Gastrocnemius medialis (tissue), 4 donors: ENCODE measurements at regions of chr1 and their contacts with region 1.

Region 1: DNA sequence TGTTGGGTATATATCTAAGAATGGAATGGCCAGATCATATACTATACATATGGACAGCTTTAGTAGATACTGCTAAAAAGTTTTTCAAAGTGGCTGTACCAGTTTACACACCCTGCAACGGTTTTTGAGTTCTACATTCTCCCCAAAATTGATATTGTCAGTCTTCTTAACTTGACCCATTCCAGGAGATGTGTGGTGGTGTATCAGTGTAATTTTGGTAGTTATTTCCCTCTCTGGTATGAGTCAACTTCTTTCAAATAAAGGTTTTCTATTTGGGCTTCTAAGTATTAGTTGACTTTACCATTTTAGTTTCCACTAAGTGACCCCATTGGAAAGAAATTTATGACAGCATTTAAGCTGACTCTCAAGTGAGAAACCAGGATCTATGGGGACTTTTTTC is 29.2 kb downstream of the INKA2 start:
- DNase-seq: no peak
- ATAC-seq: no peak
- H3K4me3 ChIP-seq: no peak overlapping the region
- H3K27ac ChIP-seq: no peak overlapping the region
- H3K4me1 ChIP-seq: no peaks in the 10 kb centered on the region
- H3K27me3 ChIP-seq: no peaks in the 10 kb centered on the region
- CTCF ChIP-seq: no peak
- POLR2A ChIP-seq: no peak

Region 2: GRCh38 chr1:111570781-111571181 is 139.2 kb before region 1 on chr1:
- in situ Hi-C with region 1: no loop called
- intact Hi-C with region 1: no loop called
- DNase-seq: no peak
- ATAC-seq: no peak
- H3K4me3 ChIP-seq: no peak overlapping the region
- H3K27ac ChIP-seq: no peak overlapping the region
- H3K4me1 ChIP-seq: no peaks in the 10 kb centered on the region
- H3K27me3 ChIP-seq: no peaks in the 10 kb centered on the region
- CTCF ChIP-seq: peak in 2 of 5 experiments; percentile 18 to 32
- POLR2A ChIP-seq: no peak

Region 3: DNA sequence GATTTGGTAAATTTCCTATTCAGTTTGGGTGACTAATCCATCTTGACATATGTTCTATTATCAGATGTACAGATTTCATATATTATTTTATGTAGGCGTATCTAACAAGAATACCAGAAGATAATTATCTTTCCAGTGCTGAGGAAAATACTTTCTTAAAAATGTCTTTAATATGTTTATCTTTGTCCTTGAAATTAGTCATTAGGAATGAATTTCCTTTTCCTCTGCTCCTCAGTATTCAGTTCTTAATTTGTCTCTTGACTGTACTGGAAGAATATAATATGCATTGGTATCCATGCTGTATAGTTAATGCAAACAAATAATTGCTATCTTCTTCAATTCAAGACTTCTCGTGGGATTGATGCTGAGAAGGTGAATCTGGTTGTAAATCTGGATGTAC is 52.3 kb after region 1 on chr1:
- in situ Hi-C with region 1: loop called in 2 of 4 experiments (anchors 5 kb)
- intact Hi-C with region 1: no loop called
- DNase-seq: no peak
- ATAC-seq: no peak
- H3K4me3 ChIP-seq: no peak overlapping the region
- H3K27ac ChIP-seq: no peak overlapping the region
- H3K4me1 ChIP-seq: peaks cover 0 to under 1% of the 10 kb centered on the region in 2 donors
- H3K27me3 ChIP-seq: no peaks in the 10 kb centered on the region
- CTCF ChIP-seq: no peak
- POLR2A ChIP-seq: no peak